ENCODE measurements at regions of chr6 and their contacts with region 1.

Region 1: DNA sequence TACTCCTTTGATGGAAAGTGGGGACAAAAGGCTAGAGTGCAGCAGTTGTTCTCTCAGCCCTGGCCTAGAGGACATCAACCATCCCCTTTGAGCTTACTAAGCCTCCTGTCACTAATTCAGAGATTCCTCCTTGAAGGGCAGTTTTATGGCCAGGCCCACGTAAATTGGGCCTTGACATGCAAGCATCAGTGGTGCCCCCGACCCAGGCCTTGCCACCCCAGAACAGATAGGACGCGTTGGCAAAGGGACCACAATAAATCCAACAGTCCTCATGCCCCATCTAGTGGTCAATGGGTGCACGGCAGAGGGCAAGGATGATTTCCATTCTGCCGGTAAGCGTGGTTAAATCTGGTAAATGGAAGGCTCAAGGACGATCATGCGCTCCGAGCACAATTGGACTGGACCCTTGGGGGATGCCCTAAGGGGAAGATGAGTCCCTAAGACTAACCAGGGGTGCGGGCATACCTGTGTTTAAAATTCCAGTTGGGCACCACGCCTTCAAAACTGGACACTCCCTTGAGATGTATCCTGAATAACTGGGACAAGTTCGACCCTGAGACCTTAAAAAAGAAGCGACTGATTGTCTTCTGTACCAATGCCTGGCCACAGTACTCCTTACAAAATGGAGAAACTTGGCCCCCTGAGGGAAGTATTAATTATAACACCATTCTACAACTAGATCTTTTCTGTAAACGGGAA is 32.6 kb downstream of the CEP85L start:
- DNase-seq: peak; percentile 68
- H3K4me3 ChIP-seq: no peak overlapping the region
- H3K27ac ChIP-seq: no peak overlapping the region
- H3K4me1 ChIP-seq: no peaks in the 10 kb centered on the region
- H3K27me3 ChIP-seq: no peaks in the 10 kb centered on the region
- CTCF ChIP-seq: peak; percentile 83 to 91 (median 89)
- EP300 ChIP-seq: no peak
- POLR2A ChIP-seq: no peak

Region 2: GRCh38 chr6:117976030-117976651 is 642.7 kb before region 1 on chr6:
- in situ Hi-C with region 1: loop called in 1 of 4 experiments (anchors 25 kb)
- intact Hi-C with region 1: no loop called
- DNase-seq: no peak
- H3K4me3 ChIP-seq: no peak overlapping the region
- H3K27ac ChIP-seq: no peak overlapping the region
- H3K4me1 ChIP-seq: no peaks in the 10 kb centered on the region
- H3K27me3 ChIP-seq: no peaks in the 10 kb centered on the region
- CTCF ChIP-seq: peak; percentile 32 to 50 (median 49)
- EP300 ChIP-seq: no peak
- POLR2A ChIP-seq: no peak

Region 3: DNA sequence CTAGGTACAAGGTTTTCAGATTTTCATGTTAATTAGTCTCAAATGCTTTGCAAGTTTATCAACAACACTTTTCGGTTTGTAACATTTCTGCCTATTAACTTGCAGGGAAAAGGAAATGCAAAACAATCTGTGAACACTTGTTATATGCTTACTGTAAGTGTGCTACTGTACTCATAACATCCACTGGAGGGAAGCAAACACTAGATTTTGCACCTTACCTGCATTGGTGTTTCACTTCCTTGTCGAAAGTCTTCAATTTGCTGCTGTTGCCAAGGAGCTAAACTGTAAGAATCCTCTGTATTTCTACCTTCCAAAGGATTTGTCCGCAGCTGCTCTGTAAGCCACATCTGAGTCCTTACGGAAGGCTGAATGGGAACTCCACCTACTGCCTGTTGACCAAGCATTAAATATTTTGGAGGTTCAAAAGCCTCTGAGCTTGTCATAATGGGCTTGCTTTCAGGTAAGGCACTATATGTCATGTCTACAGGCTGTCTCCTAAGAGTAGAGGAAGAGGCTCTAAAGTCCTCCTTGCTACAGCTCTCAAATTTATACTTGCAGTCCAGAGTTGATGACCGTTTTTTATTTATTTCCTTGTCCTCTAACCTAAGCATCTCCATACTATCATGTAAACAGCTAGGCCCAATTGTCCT is 53.4 kb before region 1 on chr6:
- in situ Hi-C with region 1: loop called in 1 of 4 experiments (anchors 10 kb)
- intact Hi-C with region 1: no loop called
- DNase-seq: no peak
- H3K4me3 ChIP-seq: no peak overlapping the region
- H3K27ac ChIP-seq: no peak overlapping the region
- H3K4me1 ChIP-seq: peaks cover 0 to 4% (median 0%) of the 10 kb centered on the region in 4 donors
- H3K27me3 ChIP-seq: no peaks in the 10 kb centered on the region
- CTCF ChIP-seq: peak; percentile 30 to 67 (median 47)
- EP300 ChIP-seq: no peak
- POLR2A ChIP-seq: no peak

Measured in transverse colon (tissue), 4 donors.